Posterior cingulate gyrus (tissue), 11 donors: ENCODE measurements at regions of chr13 and their contacts with region 1.

Region 1: GRCh38 chr13:24063281-24063877 is 97.1 kb upstream of the SPATA13 start:
- DNase-seq: no peak

Region 2: GRCh38 chr13:24119626-24120508 is 56.5 kb after region 1 on chr13:
- intact Hi-C with region 1: loop called (anchors 10 kb)
- DNase-seq: no peak